AG04450 (cell line): ENCODE measurements at regions of chr7 and their contacts with region 1.

Region 1: DNA sequence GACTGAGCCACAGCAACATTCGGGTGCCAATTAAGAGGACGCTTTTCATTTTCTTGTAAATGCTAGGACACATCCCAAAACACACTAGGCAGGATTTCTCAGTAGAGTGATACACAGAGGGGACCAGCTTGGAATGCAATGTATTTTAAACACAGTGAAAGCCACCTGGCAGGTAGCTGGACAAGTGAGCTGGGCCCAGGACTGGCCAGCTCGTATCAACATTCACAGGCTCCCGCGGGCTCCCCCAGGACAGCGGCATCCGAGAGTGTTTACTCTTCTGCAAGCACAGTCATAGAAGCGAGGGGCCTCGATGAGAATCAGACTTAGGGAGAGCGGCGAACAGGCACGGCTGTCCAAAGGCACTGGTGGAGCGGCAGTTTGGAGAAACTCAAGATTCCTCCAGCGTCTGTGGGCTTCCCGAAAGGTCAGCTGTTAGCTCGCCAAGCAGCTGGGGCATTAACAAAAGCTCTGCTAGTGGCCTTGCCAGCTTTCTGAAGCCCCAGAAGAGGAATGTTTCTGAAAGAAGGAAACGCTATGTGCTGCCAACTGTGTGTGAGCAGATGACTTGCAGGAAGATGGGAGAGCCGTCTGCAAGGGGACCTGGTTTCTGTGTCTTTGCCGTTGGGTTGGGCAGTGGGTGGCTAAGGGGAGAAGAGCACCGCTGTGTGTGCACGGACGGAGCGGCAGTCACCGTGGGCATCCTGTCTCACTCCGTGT is 41.9 kb downstream of the AMZ1 start:
- DNase-seq: no peak
- H3K4me3 ChIP-seq: no peak overlapping the region
- H3K27ac ChIP-seq: peak overlapping the region; percentile 73
- H3K27me3 ChIP-seq: no peaks in the 10 kb centered on the region
- CTCF ChIP-seq: no peak

Region 2: DNA sequence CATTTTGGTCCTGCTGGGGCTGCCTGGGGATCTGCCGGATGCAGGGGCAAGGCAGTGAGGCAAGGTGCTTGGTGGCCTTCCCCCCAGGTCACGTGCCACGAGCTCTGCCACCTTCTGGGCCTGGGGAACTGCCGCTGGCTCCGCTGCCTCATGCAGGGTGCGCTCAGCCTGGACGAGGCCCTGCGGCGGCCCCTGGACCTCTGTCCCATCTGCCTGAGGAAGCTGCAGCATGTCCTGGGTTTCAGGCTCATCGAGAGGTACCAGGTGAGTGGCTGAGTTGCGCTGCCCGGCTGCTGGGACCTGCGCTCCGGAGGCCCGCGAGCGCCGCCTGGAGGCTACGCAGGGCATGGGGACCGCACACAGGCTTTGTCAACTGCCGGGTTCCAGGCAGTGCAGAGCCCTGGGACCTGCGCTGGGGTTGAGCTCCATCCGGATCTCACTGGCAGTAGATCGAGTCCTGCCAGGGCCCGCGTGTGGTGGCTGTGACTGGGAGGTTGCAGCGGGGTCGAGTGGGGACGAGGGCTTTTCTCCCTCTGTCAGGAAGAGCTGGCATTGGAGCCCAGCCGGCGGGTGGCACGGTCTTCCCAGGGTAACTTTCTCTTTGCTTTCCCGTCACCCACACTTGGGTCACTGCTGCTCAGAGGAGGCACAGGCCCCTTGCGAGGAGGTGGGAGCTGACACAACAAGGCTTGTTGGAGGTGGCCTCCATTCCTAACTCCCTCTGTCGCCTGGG is 20.1 kb before region 1 on chr7:
- CTCF ChIA-PET with region 1: interaction called, 25 read pairs
- POLR2A ChIA-PET with region 1: interaction called, 3 read pairs
- DNase-seq: no peak
- H3K4me3 ChIP-seq: no peak overlapping the region
- H3K27ac ChIP-seq: no peak overlapping the region
- H3K27me3 ChIP-seq: no peaks in the 10 kb centered on the region
- CTCF ChIP-seq: peak; percentile 78

Region 3: DNA sequence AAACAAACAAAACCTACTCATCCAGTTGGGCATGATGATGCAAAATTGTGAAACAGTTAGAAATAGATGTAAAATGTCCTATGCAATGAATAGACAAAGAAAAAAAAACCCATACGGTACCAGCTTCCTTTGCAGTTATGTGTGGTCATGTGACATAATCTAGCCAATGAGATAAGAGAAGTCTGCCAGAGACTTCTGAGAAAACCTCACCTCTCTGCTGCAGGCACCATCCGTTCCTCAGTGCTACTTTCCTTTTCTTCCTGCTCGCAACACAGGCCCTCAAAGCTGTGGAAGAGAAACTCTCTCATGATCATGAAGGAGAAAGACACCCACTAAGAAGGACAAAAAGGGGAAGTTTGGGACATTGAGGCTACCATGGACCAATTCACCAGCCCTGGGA is 390.7 kb after region 1 on chr7:
- CTCF ChIA-PET with region 1: no interaction called
- POLR2A ChIA-PET with region 1: no interaction called
- DNase-seq: no peak
- H3K4me3 ChIP-seq: no peak overlapping the region
- H3K27ac ChIP-seq: no peak overlapping the region
- H3K27me3 ChIP-seq: no peaks in the 10 kb centered on the region
- CTCF ChIP-seq: no peak